ENCODE measurements at regions of chr2 and their contacts with region 1.

Region 1: DNA sequence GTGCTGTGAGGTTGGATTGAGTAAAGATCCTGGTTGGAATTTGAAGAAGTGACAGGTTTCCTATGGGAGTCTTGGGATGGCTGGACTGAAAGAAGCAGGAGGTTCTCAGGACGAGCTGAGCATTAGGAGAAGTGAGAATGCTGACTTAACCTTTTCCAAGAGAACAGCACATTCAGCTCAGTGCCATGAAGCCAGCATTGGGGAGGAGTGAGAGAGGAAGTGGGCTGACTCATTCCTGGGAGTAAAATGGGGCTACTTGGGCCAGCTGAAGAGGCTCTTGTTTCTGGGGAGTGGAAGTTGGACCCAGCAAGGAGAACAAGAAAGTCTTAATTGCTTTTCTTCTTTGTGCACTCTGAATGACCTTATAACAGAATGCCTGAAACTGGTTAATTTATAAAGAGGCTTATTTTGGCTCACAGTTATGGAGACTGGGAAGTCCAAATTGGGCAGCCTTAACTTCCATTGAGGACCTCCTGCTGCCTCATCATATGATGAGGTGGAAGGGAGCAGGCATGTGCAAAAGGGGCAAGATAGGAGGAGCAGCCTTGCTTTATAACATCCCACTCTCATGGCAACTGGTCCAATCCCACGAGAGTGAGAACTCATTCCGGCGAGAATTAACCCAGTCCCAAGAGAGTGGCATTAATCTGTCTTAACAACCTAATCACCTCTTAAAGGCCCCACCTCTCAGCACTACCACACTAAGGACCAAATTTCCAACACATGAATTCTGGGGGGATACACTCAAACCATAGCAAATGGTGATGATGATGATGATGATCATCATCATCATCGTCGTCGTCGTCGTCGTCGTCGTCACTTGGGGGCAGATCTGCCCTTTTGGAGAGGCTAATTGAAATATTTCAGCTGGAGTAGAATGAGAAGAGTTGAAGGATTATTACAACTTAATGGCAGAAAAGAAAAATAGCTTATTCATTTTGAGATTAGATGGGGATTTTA is 26.1 kb downstream of the DGUOK start:
- DNase-seq: no peak
- H3K4me3 ChIP-seq: no peak overlapping the region
- H3K27ac ChIP-seq: no peak overlapping the region
- H3K4me1 ChIP-seq: no peaks in the 10 kb centered on the region
- H3K27me3 ChIP-seq: no peaks in the 10 kb centered on the region
- CTCF ChIP-seq: no peak
- POLR2A ChIP-seq: no peak

Region 2: GRCh38 chr2:73939419-73939818 is 13.4 kb before region 1 on chr2:
- intact Hi-C with region 1: loop called (anchors 1 kb)
- DNase-seq: no peak
- H3K4me3 ChIP-seq: no peak overlapping the region
- H3K27ac ChIP-seq: peak overlapping the region in 1 of 2 donors; percentile 15
- H3K4me1 ChIP-seq: no peaks in the 10 kb centered on the region
- H3K27me3 ChIP-seq: no peaks in the 10 kb centered on the region
- CTCF ChIP-seq: no peak
- POLR2A ChIP-seq: no peak

Region 3: GRCh38 chr2:74002487-74003391 is 50.0 kb after region 1 on chr2:
- intact Hi-C with region 1: no loop called
- DNase-seq: peak; percentile 51 to 70
- H3K4me3 ChIP-seq: peak overlapping the region; percentile 52 to 84 (median 62)
- H3K27ac ChIP-seq: peak overlapping the region; percentile 41 to 52
- H3K4me1 ChIP-seq: peaks cover 0 to 30% of the 10 kb centered on the region in 2 donors
- H3K27me3 ChIP-seq: no peaks in the 10 kb centered on the region
- CTCF ChIP-seq: peak in 1 of 3 donors; percentile 10
- POLR2A ChIP-seq: no peak

Measured in breast epithelium (tissue), 4 donors.